Posterior vena cava (tissue), 2 donors: ENCODE measurements at regions of chr14 and their contacts with region 1.

Region 1: GRCh38 chr14:20413045-20413799 is at the start of gene TEP1:
- DNase-seq: peak; percentile 97
- total RNA-seq, gene TEP1: 36.1 to 38.7 TPM

Region 2: DNA sequence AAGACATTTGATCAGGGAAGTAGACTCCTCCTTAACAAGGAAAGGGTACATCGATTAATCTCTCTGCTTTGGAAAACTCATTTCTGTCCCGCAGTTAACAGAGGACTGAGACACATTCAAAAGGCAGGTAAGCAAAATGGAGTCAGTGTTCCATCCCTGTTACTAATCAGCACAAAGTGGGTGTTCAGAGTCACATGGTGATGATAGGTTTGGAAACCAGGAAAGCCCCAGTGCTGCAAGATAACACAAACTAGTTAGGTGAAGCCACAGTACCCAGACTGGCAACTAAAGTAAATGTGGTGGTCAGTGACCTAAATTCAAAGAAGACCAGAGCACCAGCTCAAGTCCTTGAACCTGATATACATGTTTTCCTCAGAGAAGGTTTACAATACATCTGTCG is 300.9 kb before region 1 on chr14:
- intact Hi-C with region 1: no loop called
- DNase-seq: no peak

Region 3: GRCh38 chr14:20379743-20380142 is 33.5 kb before region 1 on chr14:
- intact Hi-C with region 1: loop called in 1 of 2 experiments (anchors 1 kb)
- DNase-seq: no peak